ENCODE measurements at regions of chr18 and their contacts with region 1.

Region 1: DNA sequence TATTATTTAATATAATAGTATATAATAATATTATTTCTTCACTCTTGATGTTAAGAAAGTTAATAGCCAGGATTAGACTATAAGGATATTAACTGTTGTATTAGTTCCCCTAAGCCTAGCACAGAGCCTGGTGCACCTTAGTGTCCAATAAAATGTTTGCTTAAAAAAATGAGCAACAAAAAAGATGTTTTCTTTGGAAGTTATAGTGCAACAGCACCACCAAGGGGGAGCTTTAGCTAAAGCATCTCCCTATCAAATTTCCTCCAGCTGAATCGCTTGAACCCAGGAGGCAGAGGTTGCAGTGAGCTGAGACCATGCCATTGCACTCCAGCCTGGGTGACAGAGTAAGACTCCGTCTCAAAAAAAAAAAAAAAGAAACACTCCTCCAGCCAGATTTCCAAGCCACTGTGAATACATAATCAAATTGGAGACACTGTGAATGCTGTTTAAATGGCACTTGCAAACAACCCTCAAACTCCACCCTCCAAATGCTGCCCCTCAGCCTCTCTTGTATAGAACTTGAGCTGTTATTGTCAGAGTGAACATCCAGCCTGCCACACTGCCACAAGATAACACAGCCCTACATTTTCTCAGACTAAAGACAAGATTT is 221.9 kb downstream of the DYM start:
- DNase-seq: no peak
- CTCF ChIP-seq: no peak

Region 2: GRCh38 chr18:48711651-48712486 is 526.7 kb before region 1 on chr18:
- CTCF ChIA-PET with region 1: interaction called, 10 read pairs
- POLR2A ChIA-PET with region 1: no interaction called
- DNase-seq: peak; percentile 68
- CTCF ChIP-seq: peak; percentile 38

Region 3: GRCh38 chr18:49227441-49228165 is 10.9 kb before region 1 on chr18:
- CTCF ChIA-PET with region 1: interaction called, 17 read pairs
- POLR2A ChIA-PET with region 1: no interaction called
- DNase-seq: no peak
- CTCF ChIP-seq: no peak

Region 4: DNA sequence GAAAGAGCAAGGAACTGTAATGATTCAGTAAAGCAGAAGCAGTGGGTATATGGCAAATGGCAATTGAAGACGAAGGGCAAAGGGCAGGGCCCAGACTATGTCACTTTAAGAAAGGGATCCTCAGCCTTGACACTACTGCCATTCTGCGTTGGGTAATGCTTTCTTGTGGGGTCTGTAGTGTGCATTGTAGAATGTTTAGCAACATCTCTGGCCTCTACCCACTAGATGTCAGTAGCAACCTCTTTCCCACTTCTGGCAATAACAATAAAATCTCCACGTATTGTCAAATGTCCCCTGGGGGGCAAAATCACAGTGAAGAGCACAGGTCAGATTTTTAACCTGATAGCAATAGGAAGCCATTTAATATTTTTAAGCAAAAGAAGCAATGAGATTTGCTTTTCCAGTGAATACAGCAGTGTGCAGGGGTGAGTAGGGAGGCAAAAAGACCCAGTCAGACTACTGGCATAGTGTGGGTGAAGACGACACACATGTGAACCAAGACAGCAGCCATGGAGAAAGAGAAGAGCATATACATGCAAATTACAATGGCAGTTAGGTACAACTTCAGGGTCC is 12.4 kb after region 1 on chr18:
- CTCF ChIA-PET with region 1: interaction called, 12 read pairs
- POLR2A ChIA-PET with region 1: no interaction called
- DNase-seq: no peak
- CTCF ChIP-seq: no peak

Region 5: DNA sequence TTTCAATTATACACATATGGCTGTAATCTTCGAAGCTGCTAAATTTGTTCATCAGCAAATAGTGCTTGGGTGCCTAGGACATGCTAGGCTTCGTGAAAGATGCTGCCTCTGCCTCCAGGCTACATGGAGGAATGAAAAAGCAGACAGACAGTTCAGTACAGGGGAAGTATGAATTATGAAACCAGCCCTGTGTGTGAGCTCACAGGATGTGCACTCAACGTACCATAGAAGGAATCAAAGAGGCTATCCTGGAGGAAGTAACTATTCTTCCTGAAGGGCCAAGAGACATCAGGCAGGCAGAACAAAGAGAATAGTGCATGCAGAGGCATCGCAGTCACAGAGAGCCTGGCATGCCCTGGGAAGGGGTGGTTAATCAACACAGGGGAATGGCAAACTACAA is 160.5 kb after region 1 on chr18:
- CTCF ChIA-PET with region 1: no interaction called
- POLR2A ChIA-PET with region 1: no interaction called
- DNase-seq: peak; percentile 29
- CTCF ChIP-seq: no peak

Measured in GM10248 (cell line).